Caco-2 (cell line): ENCODE measurements at regions of chr6 and their contacts with region 1.

Region 1: GRCh38 chr6:146931208-146931607 is 273.0 kb upstream of the STXBP5 start:
- DNase-seq: no peak
- H3K4me3 ChIP-seq: no peak overlapping the region
- H3K4me3 Mint-ChIP-seq: no peak overlapping the region
- H3K27ac Mint-ChIP-seq: no peak overlapping the region
- H3K4me1 ChIP-seq: no peaks in the 10 kb centered on the region
- H3K4me1 Mint-ChIP-seq: no peaks in the 10 kb centered on the region
- H3K27me3 ChIP-seq: no peaks in the 10 kb centered on the region
- H3K27me3 Mint-ChIP-seq: no peaks in the 10 kb centered on the region
- CTCF ChIP-seq: peak in 1 of 2 experiments; percentile 4

Region 2: DNA sequence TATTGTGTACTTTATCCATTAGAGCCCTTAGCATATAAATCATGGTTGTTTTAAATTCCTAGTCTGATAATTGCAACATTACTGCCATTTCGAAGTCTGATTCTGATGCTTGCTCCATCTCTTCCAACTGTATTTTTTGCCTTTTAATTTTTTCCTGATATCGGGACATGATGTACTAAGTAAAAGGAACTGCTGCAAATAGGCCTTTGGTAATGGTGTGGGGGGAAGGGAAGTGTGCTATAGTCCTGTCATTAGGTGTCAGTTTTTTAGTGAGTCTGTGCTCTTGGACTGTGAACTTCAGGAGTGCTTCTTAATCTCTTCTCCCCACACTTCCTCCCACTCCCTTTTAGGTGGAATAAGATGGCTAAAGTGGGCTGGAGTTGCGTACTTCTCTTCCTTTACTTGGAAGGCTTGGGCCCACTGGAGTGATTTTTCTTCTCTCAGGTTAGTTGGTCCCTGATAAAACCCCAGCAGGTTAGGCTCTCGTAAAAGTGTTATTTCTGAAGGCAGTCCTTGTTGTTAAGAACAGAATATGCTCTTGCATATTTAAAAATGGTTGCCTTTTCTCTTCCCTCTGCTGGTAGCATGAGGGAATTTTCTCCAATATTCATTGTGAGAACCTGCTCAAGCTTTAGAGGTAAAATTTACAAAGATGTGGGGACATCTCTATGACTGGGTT is 291.1 kb after region 1 on chr6:
- CTCF ChIA-PET with region 1: no interaction called
- POLR2A ChIA-PET with region 1: no interaction called
- intact Hi-C with region 1: loop called (anchors 1 kb)
- DNase-seq: peak in 1 of 2 experiments; percentile 29
- H3K4me3 ChIP-seq: no peak overlapping the region
- H3K4me3 Mint-ChIP-seq: no peak overlapping the region
- H3K27ac Mint-ChIP-seq: no peak overlapping the region
- H3K4me1 ChIP-seq: 0 out of 2 replicates have a peak, but pooled peaks cover 5% of the 10 kb centered on the region
- H3K4me1 Mint-ChIP-seq: peaks cover 8% of the 10 kb centered on the region
- H3K27me3 ChIP-seq: no peaks in the 10 kb centered on the region
- H3K27me3 Mint-ChIP-seq: no peaks in the 10 kb centered on the region
- CTCF ChIP-seq: peak; percentile 49 to 52